Activated CD4-positive, alpha-beta memory T cell treated with anti-CD3 and anti-CD28 coated beads for 36 hours (primary cell): ENCODE measurements at regions of chr6 and their contacts with region 1.

Region 1: DNA sequence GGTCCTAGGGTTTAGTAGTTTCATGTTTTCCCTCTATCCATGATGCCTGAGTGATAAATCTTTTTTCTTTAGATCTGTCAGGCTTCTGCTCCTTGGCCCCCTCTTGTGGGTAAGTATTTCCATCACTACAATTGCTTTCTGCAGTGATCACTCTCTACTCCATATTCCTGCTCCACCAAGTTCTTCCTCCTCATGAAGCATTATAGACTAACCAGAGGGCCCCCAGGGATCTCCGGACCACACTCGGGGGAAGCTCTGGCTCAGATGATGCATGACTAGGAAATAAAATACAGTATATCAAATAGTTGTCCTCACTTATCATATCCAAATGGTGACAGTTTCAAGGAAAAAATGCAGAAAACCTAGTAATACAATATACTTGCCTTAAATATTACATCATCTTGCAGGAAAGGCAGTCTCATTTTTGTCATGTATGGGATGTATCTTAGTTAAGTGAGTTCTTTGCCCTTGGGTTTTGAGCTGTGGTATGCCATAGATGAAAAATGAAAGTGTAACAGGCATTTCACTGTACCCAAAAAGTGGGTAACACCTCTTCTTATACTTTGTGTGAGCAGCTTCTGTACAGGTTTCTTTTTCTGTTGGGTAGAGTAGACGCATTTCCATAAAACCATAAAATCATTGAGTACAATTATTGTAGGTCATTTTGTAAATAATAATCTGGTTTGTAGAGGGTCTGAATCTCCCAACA is 200.9 kb upstream of the EYA4 start:
- DNase-seq: no peak
- H3K4me3 Mint-ChIP-seq: no peak overlapping the region
- H3K27ac Mint-ChIP-seq: no peak overlapping the region
- H3K4me1 Mint-ChIP-seq: no peaks in the 10 kb centered on the region
- H3K27me3 Mint-ChIP-seq: no peaks in the 10 kb centered on the region

Region 2: GRCh38 chr6:132820629-132821381 is 219.4 kb before region 1 on chr6:
- CTCF ChIA-PET with region 1: no interaction called
- POLR2A ChIA-PET with region 1: no interaction called
- intact Hi-C with region 1: loop called (anchors 10 kb)
- DNase-seq: no peak
- H3K4me3 Mint-ChIP-seq: no peak overlapping the region
- H3K27ac Mint-ChIP-seq: peak overlapping the region; percentile 64
- H3K4me1 Mint-ChIP-seq: peaks cover 50% of the 10 kb centered on the region
- H3K27me3 Mint-ChIP-seq: no peaks in the 10 kb centered on the region

Region 3: GRCh38 chr6:132919045-132919860 is 121.0 kb before region 1 on chr6:
- CTCF ChIA-PET with region 1: no interaction called
- POLR2A ChIA-PET with region 1: no interaction called
- intact Hi-C with region 1: no loop called
- DNase-seq: no peak
- H3K4me3 Mint-ChIP-seq: no peak overlapping the region
- H3K27ac Mint-ChIP-seq: no peak overlapping the region
- H3K4me1 Mint-ChIP-seq: no peaks in the 10 kb centered on the region
- H3K27me3 Mint-ChIP-seq: peaks cover 13% of the 10 kb centered on the region

Region 4: DNA sequence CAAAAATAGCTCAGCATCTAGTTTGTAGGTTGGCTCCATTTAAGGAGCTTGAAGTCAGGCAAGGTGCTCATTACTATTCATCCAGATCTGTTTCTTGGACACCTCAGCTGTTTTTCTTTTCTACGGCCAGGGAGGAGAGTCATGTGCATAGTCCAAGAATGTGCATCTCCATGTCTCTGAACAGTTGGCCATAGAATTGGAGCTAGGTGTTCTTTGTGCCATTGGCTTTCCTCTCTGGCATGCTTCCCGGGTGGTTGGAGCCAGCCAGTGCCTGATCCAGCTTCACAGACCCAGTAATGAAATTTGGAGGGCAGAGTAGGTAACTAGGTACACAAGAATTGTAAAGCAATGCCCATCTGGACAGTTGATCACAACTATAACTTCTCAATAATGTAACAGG is 222.6 kb after region 1 on chr6:
- CTCF ChIA-PET with region 1: no interaction called
- POLR2A ChIA-PET with region 1: no interaction called
- intact Hi-C with region 1: no loop called
- DNase-seq: no peak
- H3K4me3 Mint-ChIP-seq: no peak overlapping the region
- H3K27ac Mint-ChIP-seq: no peak overlapping the region
- H3K4me1 Mint-ChIP-seq: no peaks in the 10 kb centered on the region
- H3K27me3 Mint-ChIP-seq: no peaks in the 10 kb centered on the region